ENCODE measurements at regions of chr18 and their contacts with region 1.

Region 1: DNA sequence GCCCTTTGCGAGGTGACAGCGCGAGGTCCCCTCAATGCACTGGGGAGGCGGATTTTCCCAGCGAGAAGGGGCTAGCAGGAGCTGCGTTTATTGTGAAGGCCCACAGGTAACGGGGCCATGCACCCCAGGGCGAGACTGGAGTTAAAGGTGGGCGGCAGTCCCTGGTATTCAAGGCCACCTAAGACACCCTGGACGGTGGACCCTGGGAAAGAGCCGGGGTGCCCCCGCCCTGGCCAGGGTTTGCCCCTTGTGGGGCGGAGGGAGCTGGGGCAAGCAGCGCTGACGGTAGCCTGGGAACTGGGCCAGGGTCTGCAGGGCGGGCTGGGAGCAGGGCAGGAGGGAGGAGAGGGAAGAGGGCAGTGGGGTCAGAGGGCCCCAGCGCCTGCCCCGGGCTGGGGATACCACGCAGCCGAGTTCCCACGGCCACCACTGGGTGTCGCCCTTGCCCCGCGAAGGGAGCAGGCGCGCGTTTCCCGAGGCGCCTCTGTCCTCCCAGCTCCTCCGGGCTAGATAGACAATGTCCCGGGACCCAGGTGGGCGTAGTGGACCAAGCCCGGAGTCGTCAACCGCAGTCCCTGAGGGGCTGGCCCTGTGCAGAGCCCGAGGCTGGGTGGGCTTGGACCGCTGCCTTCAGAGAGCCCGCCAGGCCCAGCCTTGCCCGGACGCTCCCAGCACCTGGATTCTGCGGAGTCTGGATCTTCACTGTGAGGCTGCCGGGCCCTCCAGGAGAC is 80.2 kb downstream of the SMAD4 start:
- DNase-seq: peak; percentile 74
- ATAC-seq: peak; percentile 85 to 94 (median 89)
- H3K4me3 ChIP-seq: no peak overlapping the region
- H3K4me3 Mint-ChIP-seq: peak overlapping the region; percentile 42
- H3K27ac ChIP-seq: no peak overlapping the region
- H3K27ac Mint-ChIP-seq: no peak overlapping the region
- H3K4me1 ChIP-seq: peaks cover 27% of the 10 kb centered on the region
- H3K4me1 Mint-ChIP-seq: peaks cover 17 to 27% of the 10 kb centered on the region in 2 donors
- H3K27me3 ChIP-seq: no peaks in the 10 kb centered on the region
- H3K27me3 Mint-ChIP-seq: no peaks in the 10 kb centered on the region
- CTCF ChIP-seq: peak; percentile 98

Region 2: DNA sequence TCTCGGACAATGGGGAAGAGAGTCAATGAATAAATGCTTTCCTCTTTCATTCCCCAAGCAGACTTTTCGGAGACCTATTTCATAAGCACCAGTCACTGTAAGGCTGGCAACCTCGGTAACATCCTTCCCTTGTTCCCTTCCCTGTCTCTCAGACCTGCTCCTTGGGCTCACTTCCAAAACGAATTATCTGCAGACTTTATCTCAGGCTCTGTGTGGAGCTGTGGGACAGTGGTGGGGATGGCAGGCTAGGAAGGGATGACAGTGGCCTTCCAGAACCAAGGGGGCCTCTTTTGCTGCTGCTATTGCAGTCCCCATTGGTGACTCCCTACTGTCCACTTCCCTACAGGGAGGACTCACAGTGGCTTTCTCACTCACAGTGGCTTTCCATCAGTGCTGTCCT is 272.9 kb after region 1 on chr18:
- intact Hi-C with region 1: loop called (anchors 2 kb)
- DNase-seq: no peak
- ATAC-seq: no peak
- H3K4me3 ChIP-seq: no peak overlapping the region
- H3K4me3 Mint-ChIP-seq: no peak overlapping the region
- H3K27ac ChIP-seq: no peak overlapping the region
- H3K27ac Mint-ChIP-seq: no peak overlapping the region
- H3K4me1 ChIP-seq: no peaks in the 10 kb centered on the region
- H3K4me1 Mint-ChIP-seq: peaks cover 0 to 7% of the 10 kb centered on the region in 2 donors
- H3K27me3 ChIP-seq: no peaks in the 10 kb centered on the region
- H3K27me3 Mint-ChIP-seq: peaks cover 0 to 7% of the 10 kb centered on the region in 2 donors
- CTCF ChIP-seq: no peak

Region 3: GRCh38 chr18:51668101-51668500 is 557.9 kb after region 1 on chr18:
- intact Hi-C with region 1: loop called (anchors 10 kb)
- DNase-seq: peak; percentile 19 to 30
- ATAC-seq: peak in 1 of 3 donors; percentile 57
- H3K4me3 ChIP-seq: no peak overlapping the region
- H3K4me3 Mint-ChIP-seq: no peak overlapping the region
- H3K27ac ChIP-seq: no peak overlapping the region
- H3K27ac Mint-ChIP-seq: no peak overlapping the region
- H3K4me1 ChIP-seq: no peaks in the 10 kb centered on the region
- H3K4me1 Mint-ChIP-seq: peaks cover 7 to 10% of the 10 kb centered on the region in 2 donors
- H3K27me3 ChIP-seq: no peaks in the 10 kb centered on the region
- H3K27me3 Mint-ChIP-seq: peaks cover 20 to 22% of the 10 kb centered on the region in 2 donors
- CTCF ChIP-seq: peak; percentile 53

Region 4: GRCh38 chr18:52288403-52289004 is 1178.3 kb after region 1 on chr18:
- intact Hi-C with region 1: loop called (anchors 10 kb)
- DNase-seq: peak in 1 of 2 donors; percentile 2
- ATAC-seq: no peak
- H3K4me3 ChIP-seq: no peak overlapping the region
- H3K4me3 Mint-ChIP-seq: no peak overlapping the region
- H3K27ac ChIP-seq: no peak overlapping the region
- H3K27ac Mint-ChIP-seq: no peak overlapping the region
- H3K4me1 ChIP-seq: no peaks in the 10 kb centered on the region
- H3K4me1 Mint-ChIP-seq: no peaks in the 10 kb centered on the region
- H3K27me3 ChIP-seq: no peaks in the 10 kb centered on the region
- H3K27me3 Mint-ChIP-seq: no peaks in the 10 kb centered on the region
- CTCF ChIP-seq: no peak

Measured in natural killer cell (primary cell).